AG04450 (cell line): ENCODE measurements at regions of chr2 and their contacts with region 1.

Region 1: GRCh38 chr2:102063941-102064678 is 72.3 kb downstream of the IL1R2 start:
- DNase-seq: peak; percentile 96
- H3K4me3 ChIP-seq: peak overlapping the region; percentile 38
- H3K27ac ChIP-seq: peak overlapping the region; percentile 100
- H3K27me3 ChIP-seq: no peaks in the 10 kb centered on the region
- CTCF ChIP-seq: no peak

Region 2: DNA sequence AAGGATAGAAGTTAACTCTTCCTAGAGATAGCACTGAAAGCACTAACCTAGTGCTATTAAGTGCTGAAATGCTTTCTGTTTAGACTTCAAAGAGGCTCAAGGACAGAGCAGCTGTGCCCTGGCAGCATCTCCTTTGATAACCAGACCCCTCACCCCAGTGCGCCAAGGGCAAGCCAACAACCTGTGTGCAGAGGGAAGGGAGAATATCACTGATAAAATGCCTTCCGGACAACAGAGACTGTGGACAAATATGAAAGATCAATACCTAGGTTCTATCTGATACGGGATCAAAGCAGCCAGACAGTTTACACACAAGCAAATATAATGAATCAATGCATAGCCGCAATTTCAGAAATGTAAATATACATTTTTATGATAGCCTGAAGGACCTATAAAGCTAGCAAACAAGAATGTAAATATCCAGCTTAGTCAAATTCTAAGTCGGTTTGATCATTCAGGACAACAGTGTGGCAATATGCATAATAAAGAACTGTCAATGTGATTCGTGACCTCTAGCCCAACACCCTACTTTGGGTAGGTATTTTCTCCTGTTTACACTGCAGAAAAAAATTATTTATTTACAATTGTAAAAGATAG is 497.4 kb before region 1 on chr2:
- CTCF ChIA-PET with region 1: no interaction called
- POLR2A ChIA-PET with region 1: no interaction called
- DNase-seq: no peak
- H3K4me3 ChIP-seq: no peak overlapping the region
- H3K27ac ChIP-seq: no peak overlapping the region
- H3K27me3 ChIP-seq: peaks cover 11% of the 10 kb centered on the region
- CTCF ChIP-seq: no peak

Region 3: GRCh38 chr2:102027036-102027980 is 36.8 kb before region 1 on chr2:
- CTCF ChIA-PET with region 1: no interaction called
- POLR2A ChIA-PET with region 1: interaction called, 39 read pairs
- DNase-seq: no peak
- H3K4me3 ChIP-seq: no peak overlapping the region
- H3K27ac ChIP-seq: peak overlapping the region; percentile 75
- H3K27me3 ChIP-seq: no peaks in the 10 kb centered on the region
- CTCF ChIP-seq: no peak

Region 4: GRCh38 chr2:102033031-102033749 is 30.9 kb before region 1 on chr2:
- CTCF ChIA-PET with region 1: interaction called, 3 read pairs
- POLR2A ChIA-PET with region 1: interaction called, 39 read pairs
- DNase-seq: peak; percentile 69
- H3K4me3 ChIP-seq: no peak overlapping the region
- H3K27ac ChIP-seq: peak overlapping the region; percentile 75
- H3K27me3 ChIP-seq: no peaks in the 10 kb centered on the region
- CTCF ChIP-seq: peak; percentile 47

Region 5: DNA sequence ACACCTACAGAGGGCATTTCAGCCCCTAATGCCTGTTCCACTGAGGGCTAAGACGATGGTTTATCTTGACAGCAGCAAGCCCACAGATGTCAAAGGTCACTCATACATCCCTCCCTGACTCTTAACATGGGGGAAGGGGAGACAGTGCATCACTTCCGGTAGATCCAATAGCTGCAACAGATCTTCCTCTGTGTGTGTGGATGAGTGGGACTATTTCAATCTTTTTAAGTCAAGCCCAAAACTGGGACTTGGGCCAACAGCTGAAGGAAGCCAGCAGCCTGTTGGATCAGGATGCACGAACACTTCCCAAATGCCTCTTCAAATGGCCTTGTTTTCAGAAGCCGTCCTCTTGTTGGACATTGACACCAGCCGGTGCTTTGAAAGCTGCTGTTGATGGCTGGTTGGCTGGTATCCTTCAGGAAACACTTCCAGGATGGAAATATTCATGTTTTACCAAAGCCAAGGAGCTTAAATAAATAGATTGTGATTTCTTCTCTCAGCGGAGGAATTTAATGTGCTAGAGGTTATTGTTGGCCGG is 13.2 kb before region 1 on chr2:
- CTCF ChIA-PET with region 1: interaction called, 4 read pairs
- POLR2A ChIA-PET with region 1: interaction called, 18 read pairs
- DNase-seq: no peak
- H3K4me3 ChIP-seq: no peak overlapping the region
- H3K27ac ChIP-seq: peak overlapping the region; percentile 70
- H3K27me3 ChIP-seq: no peaks in the 10 kb centered on the region
- CTCF ChIP-seq: no peak